ENCODE measurements at regions of chr7 and their contacts with region 1.

Region 1: GRCh38 chr7:45902820-45903219 is 14.5 kb downstream of the IGFBP1 start:
- DNase-seq: no peak
- H3K4me3 ChIP-seq: no peak overlapping the region
- H3K27ac ChIP-seq: no peak overlapping the region
- H3K4me1 ChIP-seq: no peaks in the 10 kb centered on the region
- H3K27me3 ChIP-seq: peaks cover 0 to 2% (median under 1%) of the 10 kb centered on the region in 4 experiments; a peak in 2 of 7 replicates
- CTCF ChIP-seq: peak in 1 of 3 experiments; percentile 28; a peak in 2 of 4 replicates
- EP300 ChIP-seq: no peak
- POLR2A ChIP-seq: no peak
- RAD21 ChIP-seq: peak in 1 of 2 experiments; percentile 23; a peak in 1 of 4 replicates

Region 2: GRCh38 chr7:45890902-45891461 is 11.8 kb before region 1 on chr7:
- CTCF ChIA-PET with region 1: interaction called, 20 read pairs
- POLR2A ChIA-PET with region 1: interaction called, 3 read pairs
- DNase-seq: no peak
- H3K4me3 ChIP-seq: no peak overlapping the region
- H3K27ac ChIP-seq: no peak overlapping the region
- H3K4me1 ChIP-seq: peaks cover 2 to 15% (median 9%) of the 10 kb centered on the region in 4 experiments
- H3K27me3 ChIP-seq: peaks cover 23 to 42% (median 35%) of the 10 kb centered on the region in 4 experiments
- CTCF ChIP-seq: peak in 2 of 3 experiments; percentile 29 to 41; a peak in 2 of 4 replicates
- EP300 ChIP-seq: no peak
- POLR2A ChIP-seq: no peak
- RAD21 ChIP-seq: peak; percentile 65 to 70

Region 3: GRCh38 chr7:45938626-45939302 is 35.9 kb after region 1 on chr7:
- CTCF ChIA-PET with region 1: no interaction called
- POLR2A ChIA-PET with region 1: no interaction called
- DNase-seq: peak in 1 of 2 experiments; percentile 72
- H3K4me3 ChIP-seq: no peak overlapping the region
- H3K27ac ChIP-seq: no peak overlapping the region
- H3K4me1 ChIP-seq: no peaks in the 10 kb centered on the region
- H3K27me3 ChIP-seq: no peaks in the 10 kb centered on the region
- CTCF ChIP-seq: peak; percentile 50 to 70 (median 67)
- EP300 ChIP-seq: no peak
- POLR2A ChIP-seq: no peak
- RAD21 ChIP-seq: peak; percentile 55 to 66

Region 4: DNA sequence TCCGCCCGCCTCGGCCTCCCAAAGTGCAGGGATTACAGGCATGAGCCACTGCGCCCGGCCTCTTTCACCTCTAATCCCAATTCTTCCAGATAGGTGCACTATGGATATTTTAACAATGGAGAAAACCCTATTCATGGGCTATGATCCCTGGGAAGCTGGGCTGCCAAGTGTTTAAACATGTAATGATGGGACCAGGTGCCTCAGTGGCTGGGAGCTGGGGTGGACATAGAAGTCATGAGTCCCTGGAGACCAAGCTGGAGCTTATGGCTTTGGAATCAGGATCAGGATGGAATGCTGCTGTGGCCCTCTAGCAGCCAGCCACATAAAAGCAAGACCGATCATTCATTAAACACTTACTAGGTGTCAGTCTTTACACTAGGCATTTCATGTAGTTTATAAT is 60.0 kb after region 1 on chr7:
- CTCF ChIA-PET with region 1: no interaction called
- POLR2A ChIA-PET with region 1: no interaction called
- DNase-seq: peak in 1 of 2 experiments; percentile 23
- H3K4me3 ChIP-seq: no peak overlapping the region
- H3K27ac ChIP-seq: no peak overlapping the region
- H3K4me1 ChIP-seq: no peaks in the 10 kb centered on the region
- H3K27me3 ChIP-seq: no peaks in the 10 kb centered on the region
- CTCF ChIP-seq: no peak
- EP300 ChIP-seq: no peak
- POLR2A ChIP-seq: no peak
- RAD21 ChIP-seq: no peak